ENCODE measurements at regions of chr16 and their contacts with region 1.

Region 1: GRCh38 chr16:13742928-13743327 is 177.0 kb upstream of the ERCC4 start:
- DNase-seq: no peak
- ATAC-seq: no peak
- H3K4me3 ChIP-seq: no peak overlapping the region
- H3K27ac ChIP-seq: no peak overlapping the region
- H3K4me1 ChIP-seq: no peaks in the 10 kb centered on the region
- H3K27me3 ChIP-seq: peaks cover 1 to 7% of the 10 kb centered on the region in 2 experiments; a peak in 2 of 5 replicates
- CTCF ChIP-seq: no peak
- EP300 ChIP-seq: no peak
- POLR2A ChIP-seq: no peak
- RAD21 ChIP-seq: no peak

Region 2: GRCh38 chr16:13727943-13728342 is 15.0 kb before region 1 on chr16:
- CTCF ChIA-PET with region 1: no interaction called
- POLR2A ChIA-PET with region 1: no interaction called
- in situ Hi-C with region 1: no loop called
- intact Hi-C with region 1: no loop called
- DNase-seq: no peak
- ATAC-seq: no peak
- H3K4me3 ChIP-seq: no peak overlapping the region
- H3K27ac ChIP-seq: no peak overlapping the region
- H3K4me1 ChIP-seq: no peaks in the 10 kb centered on the region
- H3K27me3 ChIP-seq: peaks cover 0 to 7% of the 10 kb centered on the region in 2 experiments; a peak in 2 of 5 replicates
- CTCF ChIP-seq: no peak
- EP300 ChIP-seq: no peak
- POLR2A ChIP-seq: no peak
- RAD21 ChIP-seq: no peak

Region 3: GRCh38 chr16:13873835-13874438 is 131.0 kb after region 1 on chr16:
- CTCF ChIA-PET with region 1: interaction called, 10 read pairs
- POLR2A ChIA-PET with region 1: no interaction called
- in situ Hi-C with region 1: no loop called
- intact Hi-C with region 1: loop called (anchors 5 kb)
- DNase-seq: peak; percentile 60
- ATAC-seq: peak; percentile 85
- H3K4me3 ChIP-seq: no peak overlapping the region
- H3K27ac ChIP-seq: no peak overlapping the region
- H3K4me1 ChIP-seq: peaks cover 8% of the 10 kb centered on the region; the same call in 1 of the 2 replicates
- H3K27me3 ChIP-seq: no peaks in the 10 kb centered on the region; a peak in 1 of 5 replicates
- CTCF ChIP-seq: peak; percentile 86
- EP300 ChIP-seq: no peak
- POLR2A ChIP-seq: no peak
- RAD21 ChIP-seq: peak; percentile 60

Measured in HepG2 (cell line).